Activated naive CD8-positive, alpha-beta T cell treated with anti-CD3 and anti-CD28 coated beads, Interleukin-2, amount 10 ng/mL, durations not matched to agents 7 days and 5 days (primary cell): ENCODE measurements at regions of chr1 and their contacts with region 1.

Region 1: GRCh38 chr1:112674439-112674985 is at the start of gene MOV10:
- DNase-seq: peak; percentile 69
- ATAC-seq: peak; percentile 80
- H3K4me3 Mint-ChIP-seq: peak within 1 kb of the TSS; percentile 97
- H3K27ac Mint-ChIP-seq: peak within 1 kb of the TSS; percentile 97
- H3K4me1 Mint-ChIP-seq: peaks cover 42% of the 10 kb centered on the region
- H3K27me3 Mint-ChIP-seq: no peaks in the 10 kb centered on the region
- total RNA-seq, gene MOV10: 124 to 130 TPM

Region 2: GRCh38 chr1:112563341-112563740 is 111.2 kb before region 1 on chr1:
- POLR2A ChIA-PET with region 1: no interaction called
- DNase-seq: no peak
- ATAC-seq: no peak
- H3K4me3 Mint-ChIP-seq: no peak overlapping the region
- H3K27ac Mint-ChIP-seq: no peak overlapping the region
- H3K4me1 Mint-ChIP-seq: no peaks in the 10 kb centered on the region
- H3K27me3 Mint-ChIP-seq: no peaks in the 10 kb centered on the region

Region 3: GRCh38 chr1:112594259-112594884 is 80.1 kb before region 1 on chr1:
- POLR2A ChIA-PET with region 1: no interaction called
- DNase-seq: no peak
- ATAC-seq: no peak
- H3K4me3 Mint-ChIP-seq: no peak overlapping the region
- H3K27ac Mint-ChIP-seq: no peak overlapping the region
- H3K4me1 Mint-ChIP-seq: no peaks in the 10 kb centered on the region
- H3K27me3 Mint-ChIP-seq: no peaks in the 10 kb centered on the region

Region 4: GRCh38 chr1:112619520-112620376 is 54.8 kb before region 1 on chr1 and contains the start of gene CAPZA1:
- POLR2A ChIA-PET with region 1: interaction called, 16 read pairs
- DNase-seq: peak; percentile 92
- ATAC-seq: peak; percentile 87
- H3K4me3 Mint-ChIP-seq: peak within 1 kb of the TSS; percentile 97
- H3K27ac Mint-ChIP-seq: peak within 1 kb of the TSS; percentile 100
- H3K4me1 Mint-ChIP-seq: peaks cover 35% of the 10 kb centered on the region
- H3K27me3 Mint-ChIP-seq: no peaks in the 10 kb centered on the region
- total RNA-seq, gene CAPZA1: 248 to 251 TPM

Region 5: DNA sequence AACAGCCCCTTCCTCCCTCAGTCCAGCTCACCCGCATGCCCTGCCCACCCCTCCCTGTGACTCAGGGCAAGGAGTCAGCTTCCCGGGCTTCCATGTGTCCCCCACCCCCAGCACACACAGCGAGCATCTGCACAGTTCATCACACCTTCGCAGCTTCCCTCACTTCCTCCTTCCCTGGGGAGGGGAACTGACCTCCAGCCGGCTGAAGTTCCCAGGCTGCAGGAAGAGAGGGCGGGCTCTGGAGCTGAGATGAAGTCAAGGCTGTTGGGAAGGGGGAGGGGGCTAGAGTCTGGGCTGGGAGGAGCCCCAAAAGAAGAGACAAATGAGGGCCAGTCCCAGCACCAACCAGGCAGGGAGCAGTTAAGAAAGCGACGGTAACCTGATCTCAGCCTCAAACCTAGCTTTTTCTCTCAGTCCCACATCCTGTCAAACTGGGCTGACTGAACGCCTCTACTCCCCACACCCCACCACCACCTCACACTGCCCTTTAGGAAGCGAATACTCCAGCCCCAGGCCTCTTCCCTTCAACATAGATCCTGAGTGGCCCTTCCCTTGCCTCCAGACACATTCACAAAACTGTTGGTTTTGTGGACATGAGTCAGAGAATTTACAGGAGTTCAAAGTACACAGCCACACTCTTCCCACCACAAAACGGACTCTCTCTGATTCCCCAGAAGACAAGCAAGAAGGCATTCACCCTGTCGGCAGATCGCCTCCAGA is 30.6 kb after region 1 on chr1:
- POLR2A ChIA-PET with region 1: interaction called, 26 read pairs
- DNase-seq: peak; percentile 60
- ATAC-seq: peak; percentile 81
- H3K4me3 Mint-ChIP-seq: peak overlapping the region; percentile 84
- H3K27ac Mint-ChIP-seq: peak overlapping the region; percentile 89
- H3K4me1 Mint-ChIP-seq: peaks cover 51% of the 10 kb centered on the region
- H3K27me3 Mint-ChIP-seq: peaks cover 23% of the 10 kb centered on the region

Region 6: DNA sequence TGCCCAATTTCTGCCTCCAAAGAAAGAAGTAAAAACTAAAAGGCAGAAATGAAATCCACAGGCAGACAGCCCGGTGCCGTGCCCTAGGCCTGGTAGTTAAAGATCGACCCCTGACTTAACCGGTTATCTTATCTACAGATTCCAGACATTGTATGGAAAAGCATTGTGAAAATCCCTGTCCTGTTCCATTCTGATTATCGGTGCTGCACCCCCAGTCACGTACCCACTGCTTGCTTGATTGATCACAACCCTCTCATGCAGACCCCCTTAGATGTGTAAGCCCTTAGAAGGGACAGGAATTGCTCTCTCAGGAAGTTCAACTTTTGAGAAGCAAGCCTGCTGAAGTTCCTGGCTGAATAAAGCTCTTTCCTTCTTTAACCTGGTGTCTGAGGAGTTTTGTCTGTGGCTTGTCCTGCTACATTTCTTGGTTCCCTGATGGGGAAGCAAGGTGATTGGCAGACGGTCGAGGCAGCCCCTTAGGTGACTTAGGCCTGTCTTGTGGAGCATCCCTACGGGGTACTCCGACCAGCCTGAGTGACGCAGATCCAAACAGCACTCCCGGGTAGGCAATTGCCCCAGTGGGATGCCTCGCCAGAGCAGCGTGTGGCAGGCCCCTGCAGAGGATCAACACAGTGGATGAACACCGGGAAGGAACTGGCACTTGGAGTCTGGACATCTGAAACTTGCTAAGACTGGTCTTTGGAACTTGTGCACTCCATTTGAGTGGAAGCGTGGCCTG is 151.9 kb after region 1 on chr1:
- POLR2A ChIA-PET with region 1: no interaction called
- DNase-seq: no peak
- ATAC-seq: no peak
- H3K4me3 Mint-ChIP-seq: no peak overlapping the region
- H3K27ac Mint-ChIP-seq: no peak overlapping the region
- H3K4me1 Mint-ChIP-seq: peaks cover 5% of the 10 kb centered on the region
- H3K27me3 Mint-ChIP-seq: peaks cover 23% of the 10 kb centered on the region